ENCODE measurements at regions of chr9 and their contacts with region 1.

Region 1: GRCh38 chr9:90815183-90815943 is 13.7 kb downstream of the SYK start:
- DNase-seq: peak; percentile 92 to 98 (median 94)
- H3K4me3 ChIP-seq: peak overlapping the region in 5 of 7 experiments; percentile 24 to 67 (median 53)
- H3K27ac ChIP-seq: peak overlapping the region; percentile 58 to 85
- H3K4me1 ChIP-seq: peaks cover 22 to 74% (median 60%) of the 10 kb centered on the region in 4 experiments
- H3K27me3 ChIP-seq: no peaks in the 10 kb centered on the region

Region 2: DNA sequence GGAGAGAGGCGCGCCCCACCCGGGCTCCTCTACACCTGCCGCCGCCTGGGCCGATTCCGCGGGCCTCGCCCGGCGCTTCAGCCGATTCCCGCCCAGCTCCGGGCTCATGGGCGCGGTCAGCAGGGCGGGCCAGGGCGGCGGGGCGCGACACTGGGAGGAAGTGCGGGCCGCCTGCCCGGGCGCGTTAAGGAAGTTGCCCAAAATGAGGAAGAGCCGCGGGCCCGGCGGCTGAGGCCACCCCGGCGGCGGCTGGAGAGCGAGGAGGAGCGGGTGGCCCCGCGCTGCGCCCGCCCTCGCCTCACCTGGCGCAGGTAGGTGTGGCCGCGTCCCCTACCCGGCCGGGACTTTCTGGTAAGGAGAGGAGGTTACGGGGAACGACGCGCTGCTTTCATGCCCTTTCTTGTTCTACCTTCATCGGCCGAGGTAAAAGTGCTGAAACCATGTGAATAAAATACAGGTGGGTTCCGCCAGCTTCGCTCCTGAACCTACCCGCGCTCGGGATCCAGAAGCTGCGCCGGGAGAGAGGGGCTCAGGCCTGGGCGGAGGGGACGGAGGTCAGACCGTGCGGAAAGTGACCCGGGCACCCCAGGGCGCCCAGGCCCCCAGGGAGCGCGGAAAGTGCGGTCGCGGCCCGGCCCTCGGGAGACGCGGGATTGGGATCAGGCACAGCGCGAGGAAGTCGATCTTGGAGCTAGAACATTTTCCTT is 13.6 kb before region 1 on chr9 and contains the start of gene SYK:
- CTCF ChIA-PET with region 1: interaction called, 23 read pairs
- POLR2A ChIA-PET with region 1: interaction called, 15 read pairs
- DNase-seq: peak; percentile 77 to 92 (median 79)
- H3K4me3 ChIP-seq: peak within 1 kb of the TSS; percentile 64 to 97 (median 91)
- H3K27ac ChIP-seq: peak within 1 kb of the TSS; percentile 88 to 94
- H3K4me1 ChIP-seq: peaks cover 36 to 62% (median 48%) of the 10 kb centered on the region in 4 experiments
- H3K27me3 ChIP-seq: no peaks in the 10 kb centered on the region

Region 3: GRCh38 chr9:90838100-90838499 is 22.7 kb after region 1 on chr9:
- CTCF ChIA-PET with region 1: interaction called, 26 read pairs
- POLR2A ChIA-PET with region 1: no interaction called
- DNase-seq: peak in 2 of 3 donors; percentile 55 to 57
- H3K4me3 ChIP-seq: no peak overlapping the region
- H3K27ac ChIP-seq: no peak overlapping the region
- H3K4me1 ChIP-seq: peaks cover 7 to 57% (median 50%) of the 10 kb centered on the region in 4 experiments
- H3K27me3 ChIP-seq: no peaks in the 10 kb centered on the region